ENCODE measurements at regions of chr2 and their contacts with region 1.

Region 1: GRCh38 chr2:62410015-62410453 is 96.0 kb downstream of the TMEM17 start:
- DNase-seq: peak; percentile 49 to 73 (median 69)
- H3K4me3 ChIP-seq: no peak overlapping the region
- H3K27ac ChIP-seq: no peak overlapping the region
- H3K4me1 ChIP-seq: peaks cover 0 to 50% (median 30%) of the 10 kb centered on the region in 4 experiments
- H3K27me3 ChIP-seq: no peaks in the 10 kb centered on the region

Region 2: DNA sequence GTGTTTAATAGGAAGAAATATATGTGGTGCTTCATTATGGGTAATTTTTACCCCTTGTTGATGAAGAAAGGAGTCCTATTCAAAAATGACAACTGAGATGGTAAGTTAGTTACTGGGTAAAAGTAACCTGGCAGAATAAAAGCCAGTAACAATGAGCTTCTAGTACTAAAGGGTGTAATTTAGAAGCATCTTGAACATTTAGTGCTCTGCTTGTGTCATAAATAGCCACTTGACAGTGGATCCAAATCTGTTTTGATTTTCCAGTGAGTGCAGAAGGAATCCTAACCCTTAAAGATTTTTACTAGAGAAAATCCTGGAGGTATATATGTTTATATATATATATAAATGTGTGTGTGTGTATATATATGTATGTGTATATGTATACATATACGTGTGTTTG is 489.5 kb before region 1 on chr2:
- CTCF ChIA-PET with region 1: interaction called, 56 read pairs
- POLR2A ChIA-PET with region 1: no interaction called
- DNase-seq: no peak
- H3K4me3 ChIP-seq: no peak overlapping the region
- H3K27ac ChIP-seq: no peak overlapping the region
- H3K4me1 ChIP-seq: no peaks in the 10 kb centered on the region
- H3K27me3 ChIP-seq: no peaks in the 10 kb centered on the region

Region 3: GRCh38 chr2:61993444-61994024 is 416.5 kb before region 1 on chr2:
- CTCF ChIA-PET with region 1: interaction called, 70 read pairs
- POLR2A ChIA-PET with region 1: no interaction called
- DNase-seq: peak; percentile 70 to 85 (median 80)
- H3K4me3 ChIP-seq: no peak overlapping the region
- H3K27ac ChIP-seq: no peak overlapping the region
- H3K4me1 ChIP-seq: peaks cover 2 to 15% (median 6%) of the 10 kb centered on the region in 4 experiments
- H3K27me3 ChIP-seq: no peaks in the 10 kb centered on the region

Region 4: GRCh38 chr2:62000538-62000937 is 409.5 kb before region 1 on chr2:
- CTCF ChIA-PET with region 1: interaction called, 70 read pairs
- POLR2A ChIA-PET with region 1: no interaction called
- DNase-seq: no peak
- H3K4me3 ChIP-seq: no peak overlapping the region
- H3K27ac ChIP-seq: no peak overlapping the region
- H3K4me1 ChIP-seq: peaks cover 0 to 9% (median 2%) of the 10 kb centered on the region in 4 experiments
- H3K27me3 ChIP-seq: no peaks in the 10 kb centered on the region

Region 5: DNA sequence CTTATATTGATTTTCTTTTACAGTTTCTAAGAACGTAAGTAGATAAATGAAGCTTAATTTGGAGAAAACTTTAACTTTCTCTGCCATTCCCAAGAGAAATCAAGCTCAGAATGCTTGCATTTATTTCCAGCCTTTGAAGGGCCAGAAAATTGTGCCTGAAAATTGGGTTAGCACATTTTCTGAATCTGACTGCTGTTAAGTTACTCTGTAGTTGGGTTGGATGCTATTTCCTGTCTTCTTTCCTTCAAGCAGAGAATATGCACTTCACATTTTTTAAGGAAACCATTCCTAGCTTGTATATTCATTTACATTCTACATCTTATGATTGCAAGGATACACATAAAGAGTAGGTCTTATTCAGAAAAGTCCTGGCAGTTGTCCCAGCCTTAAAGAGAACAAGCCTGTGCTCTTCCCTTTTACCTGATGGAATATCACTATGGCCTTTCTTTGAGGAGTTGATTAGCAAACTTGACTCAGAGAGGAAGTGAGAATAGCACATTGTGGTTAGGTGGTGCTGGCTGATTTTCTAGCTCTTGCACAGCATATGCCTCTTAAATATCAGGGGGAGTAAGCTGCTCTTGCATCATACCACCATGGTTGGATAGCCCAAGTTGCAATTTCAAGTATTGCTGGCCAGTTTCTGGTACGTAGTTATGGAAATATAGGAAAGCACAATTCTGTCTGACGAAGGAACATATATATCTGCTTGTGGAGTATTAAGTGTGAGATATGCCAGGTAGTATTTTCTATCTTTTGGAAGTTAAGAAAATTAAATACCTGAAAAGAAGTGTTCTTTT is 370.9 kb before region 1 on chr2:
- CTCF ChIA-PET with region 1: interaction called, 12 read pairs
- POLR2A ChIA-PET with region 1: no interaction called
- DNase-seq: peak; percentile 73 to 93 (median 89)
- H3K4me3 ChIP-seq: no peak overlapping the region
- H3K27ac ChIP-seq: peak overlapping the region; percentile 56 to 72
- H3K4me1 ChIP-seq: peaks cover 5 to 29% (median 16%) of the 10 kb centered on the region in 4 experiments
- H3K27me3 ChIP-seq: no peaks in the 10 kb centered on the region